Activated CD4-positive, alpha-beta T cell treated with anti-CD3 and anti-CD28 coated beads for 36 hours (primary cell): ENCODE measurements at regions of chr21 and their contacts with region 1.

Region 1: DNA sequence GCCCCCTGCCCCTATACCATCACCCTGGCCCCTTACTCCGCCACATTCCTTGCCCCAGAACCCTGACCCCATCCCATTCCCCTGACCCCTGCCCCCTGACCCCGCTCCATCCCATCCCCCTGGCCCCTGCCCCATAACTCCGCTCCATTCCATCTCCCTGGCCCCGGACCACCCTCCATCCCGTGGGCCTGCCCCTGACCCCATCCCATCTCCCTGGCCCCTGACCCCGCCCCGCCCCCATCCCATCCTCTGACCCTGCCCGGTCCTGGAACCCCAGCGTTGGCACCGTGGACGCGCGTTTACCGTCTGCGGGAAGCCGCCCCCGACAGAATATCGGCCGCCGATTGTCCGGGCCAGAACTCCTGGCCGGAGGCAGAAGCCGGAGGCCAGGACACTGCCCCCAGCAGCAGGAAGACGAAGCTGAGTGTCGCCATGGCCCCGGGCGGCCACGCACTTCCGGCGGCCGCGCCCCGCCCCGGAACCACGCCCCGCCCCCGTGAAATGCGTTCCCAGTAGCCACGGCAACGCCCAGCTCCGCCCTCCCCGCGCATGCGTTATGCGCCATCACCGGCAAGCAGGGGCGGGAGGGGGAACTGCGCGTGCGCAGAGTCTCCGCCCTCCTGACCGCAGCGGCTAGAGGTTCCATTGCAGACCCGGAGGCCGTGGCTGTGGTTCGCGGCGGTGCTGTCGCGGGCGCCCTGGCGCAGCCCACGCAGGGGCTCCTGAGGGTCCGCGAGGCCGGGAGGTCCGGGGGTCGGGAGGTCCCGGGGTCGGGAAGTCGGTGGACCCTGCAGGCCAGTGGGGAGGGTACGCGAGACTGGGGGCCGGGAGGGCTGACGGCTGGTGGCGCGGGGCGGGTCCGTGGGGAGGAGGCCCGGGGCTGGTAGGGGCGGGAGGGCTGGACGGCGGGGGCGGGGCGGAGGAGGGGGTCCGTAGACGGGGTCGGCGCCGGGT is at the start of gene POFUT2:
- DNase-seq: peak; percentile 99
- ATAC-seq: peak; percentile 86
- H3K4me3 Mint-ChIP-seq: peak within 1 kb of the TSS; percentile 75
- H3K27ac Mint-ChIP-seq: no peak within 1 kb of the TSS
- H3K4me1 Mint-ChIP-seq: peaks cover 15% of the 10 kb centered on the region
- H3K27me3 Mint-ChIP-seq: no peaks in the 10 kb centered on the region
- total RNA-seq, gene POFUT2: 14.7 to 14.9 TPM

Region 2: GRCh38 chr21:45080639-45081414 is 206.9 kb before region 1 on chr21:
- CTCF ChIA-PET with region 1: interaction called, 3 read pairs
- POLR2A ChIA-PET with region 1: interaction called, 4 read pairs
- intact Hi-C with region 1: loop called in 1 of 2 experiments (anchors 5 kb)
- DNase-seq: peak; percentile 64
- ATAC-seq: peak; percentile 42
- H3K4me3 Mint-ChIP-seq: peak overlapping the region; percentile 22
- H3K27ac Mint-ChIP-seq: peak overlapping the region; percentile 92
- H3K4me1 Mint-ChIP-seq: peaks cover 100% of the 10 kb centered on the region
- H3K27me3 Mint-ChIP-seq: no peaks in the 10 kb centered on the region

Region 3: DNA sequence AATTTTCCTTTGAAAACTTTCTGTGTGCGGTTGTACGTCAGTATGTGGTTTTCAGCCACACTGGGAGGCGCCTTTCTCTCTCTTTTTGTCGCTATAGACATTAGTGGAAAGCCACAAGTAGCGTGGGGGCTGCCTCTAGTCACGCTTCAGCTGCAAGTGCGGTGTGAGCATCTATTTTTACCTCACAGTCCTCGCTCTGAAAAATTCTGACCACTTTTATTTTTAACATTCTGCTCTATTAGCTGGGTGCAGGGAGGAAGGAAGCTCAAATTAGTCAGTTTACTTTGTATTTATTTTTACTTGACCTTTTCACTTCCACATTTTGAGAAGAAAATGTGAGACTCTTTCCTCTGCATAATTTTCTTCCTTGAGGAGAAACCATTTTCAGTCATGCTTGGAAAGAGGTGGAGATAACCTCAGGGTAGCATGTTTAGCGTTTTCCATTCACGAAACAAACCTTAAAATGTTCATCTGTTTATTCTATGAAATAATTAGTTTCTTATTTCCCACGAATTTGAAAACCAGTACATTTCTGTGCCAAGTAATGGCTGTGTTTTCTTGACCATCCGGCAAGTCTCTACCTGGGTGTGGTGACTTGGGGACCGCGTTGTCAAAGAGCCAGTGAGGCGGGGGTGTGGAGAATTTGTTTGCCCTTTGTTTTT is 177.8 kb before region 1 on chr21:
- CTCF ChIA-PET with region 1: no interaction called
- POLR2A ChIA-PET with region 1: no interaction called
- intact Hi-C with region 1: no loop called
- DNase-seq: peak; percentile 70
- ATAC-seq: peak; percentile 59
- H3K4me3 Mint-ChIP-seq: peak overlapping the region; percentile 62
- H3K27ac Mint-ChIP-seq: peak overlapping the region; percentile 74
- H3K4me1 Mint-ChIP-seq: peaks cover 76% of the 10 kb centered on the region
- H3K27me3 Mint-ChIP-seq: no peaks in the 10 kb centered on the region

Region 4: GRCh38 chr21:45228171-45228641 is 59.5 kb before region 1 on chr21:
- CTCF ChIA-PET with region 1: no interaction called
- POLR2A ChIA-PET with region 1: interaction called, 5 read pairs
- intact Hi-C with region 1: loop called in 1 of 2 experiments (anchors 1 kb)
- DNase-seq: peak; percentile 90
- ATAC-seq: peak; percentile 91
- H3K4me3 Mint-ChIP-seq: no peak overlapping the region
- H3K27ac Mint-ChIP-seq: no peak overlapping the region
- H3K4me1 Mint-ChIP-seq: peaks cover 48% of the 10 kb centered on the region
- H3K27me3 Mint-ChIP-seq: no peaks in the 10 kb centered on the region

Region 5: GRCh38 chr21:45248184-45248892 is 39.4 kb before region 1 on chr21:
- CTCF ChIA-PET with region 1: no interaction called
- POLR2A ChIA-PET with region 1: no interaction called
- intact Hi-C with region 1: no loop called
- DNase-seq: no peak
- ATAC-seq: no peak
- H3K4me3 Mint-ChIP-seq: no peak overlapping the region
- H3K27ac Mint-ChIP-seq: no peak overlapping the region
- H3K4me1 Mint-ChIP-seq: no peaks in the 10 kb centered on the region
- H3K27me3 Mint-ChIP-seq: peaks cover 2% of the 10 kb centered on the region

Region 6: DNA sequence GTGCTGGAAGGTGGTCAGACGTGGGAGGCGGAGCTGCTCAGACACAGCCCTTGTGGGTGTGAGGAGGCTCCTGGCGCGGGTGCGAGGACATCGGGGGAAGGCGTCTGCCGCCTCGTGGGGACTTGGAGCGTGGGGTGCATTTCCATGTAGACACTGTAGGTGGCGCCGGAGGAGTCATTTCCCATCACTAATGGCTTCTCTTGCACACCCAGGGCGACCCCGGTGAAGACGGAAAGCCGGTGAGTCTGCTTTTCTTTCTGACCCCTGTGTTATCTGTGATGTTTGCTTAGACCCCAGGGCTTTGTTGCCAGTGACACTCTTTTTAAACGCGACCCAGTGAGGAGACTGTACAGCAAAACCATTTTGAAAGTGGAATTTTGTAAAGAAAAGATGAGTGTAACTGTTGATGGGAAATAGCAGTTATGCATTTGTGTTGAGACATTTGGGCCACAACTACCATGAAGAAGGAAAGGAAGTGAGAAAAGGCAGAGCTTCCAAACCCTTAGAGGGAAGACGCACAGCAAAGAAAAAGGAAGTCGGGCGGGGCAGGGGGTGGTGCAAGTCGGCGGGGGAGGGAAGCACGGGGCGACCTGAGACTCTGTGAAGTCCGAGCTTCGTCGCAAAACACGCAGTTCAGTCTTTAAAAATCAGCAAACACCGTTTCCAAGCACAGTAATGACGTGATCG is 190.5 kb after region 1 on chr21:
- CTCF ChIA-PET with region 1: no interaction called
- POLR2A ChIA-PET with region 1: no interaction called
- intact Hi-C with region 1: loop called in 1 of 2 experiments (anchors 1 kb)
- DNase-seq: peak; percentile 89
- ATAC-seq: peak; percentile 74
- H3K4me3 Mint-ChIP-seq: peak overlapping the region; percentile 62
- H3K27ac Mint-ChIP-seq: peak overlapping the region; percentile 84
- H3K4me1 Mint-ChIP-seq: peaks cover 35% of the 10 kb centered on the region
- H3K27me3 Mint-ChIP-seq: no peaks in the 10 kb centered on the region